GM12878 (cell line): ENCODE measurements at regions of chr2 and their contacts with region 1.

Region 1: GRCh38 chr2:177148477-177149154 is 64.0 kb upstream of the HNRNPA3 start:
- DNase-seq: peak; percentile 45
- ATAC-seq: peak; percentile 95
- H3K4me3 ChIP-seq: peak overlapping the region; percentile 69
- H3K27ac ChIP-seq: no peak overlapping the region
- H3K4me1 ChIP-seq: no peaks in the 10 kb centered on the region
- H3K27me3 ChIP-seq: peaks cover 0 to 2% of the 10 kb centered on the region in 2 experiments; a peak in 1 of 4 replicates
- CTCF ChIP-seq: peak; percentile 87 to 93 (median 92)
- EP300 ChIP-seq: 0 out of 4 replicates have a peak, but pooled peaks of 1 of the 2 experiments have one; percentile 13
- POLR2A ChIP-seq: no peak
- RAD21 ChIP-seq: peak; percentile 67

Region 2: GRCh38 chr2:176126929-176127773 is 1021.5 kb before region 1 on chr2:
- CTCF ChIA-PET with region 1: interaction called, 40 read pairs
- POLR2A ChIA-PET with region 1: no interaction called
- RAD21 ChIA-PET with region 1: interaction called, 17 read pairs
- SMC1A ChIA-PET with region 1: interaction called, 13 read pairs
- in situ Hi-C with region 1: loop called (anchors 5 kb)
- intact Hi-C with region 1: loop called (anchors 2 kb)
- DNase-seq: no peak
- ATAC-seq: peak; percentile 49; the same call in 2 of the 3 replicates
- H3K4me3 ChIP-seq: no peak overlapping the region
- H3K27ac ChIP-seq: no peak overlapping the region
- H3K4me1 ChIP-seq: no peaks in the 10 kb centered on the region
- H3K27me3 ChIP-seq: peaks cover 7 to 29% of the 10 kb centered on the region in 2 experiments
- CTCF ChIP-seq: peak; percentile 61 to 77 (median 66)
- EP300 ChIP-seq: no peak
- POLR2A ChIP-seq: no peak
- RAD21 ChIP-seq: peak; percentile 81

Region 3: DNA sequence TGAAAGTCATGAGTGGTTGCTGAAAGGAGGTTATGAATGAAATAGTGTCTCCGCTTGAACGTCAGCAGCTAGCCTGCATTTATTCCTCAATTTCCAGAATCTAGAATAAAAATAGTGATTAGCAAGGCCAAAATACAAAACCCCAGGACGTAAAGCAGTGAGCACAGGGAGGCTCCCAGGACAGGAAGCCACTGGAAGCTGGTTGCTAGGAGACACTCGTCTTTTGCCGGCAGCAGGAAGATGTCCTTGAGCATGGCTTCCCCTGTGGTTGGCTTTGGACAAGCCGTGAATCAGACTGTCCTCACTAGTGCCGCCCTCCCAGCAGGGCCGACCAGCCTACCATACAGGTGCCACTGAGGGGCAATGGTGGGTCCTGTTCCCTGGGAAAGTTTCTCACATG is 505.0 kb before region 1 on chr2:
- CTCF ChIA-PET with region 1: interaction called, 15 read pairs
- POLR2A ChIA-PET with region 1: no interaction called
- RAD21 ChIA-PET with region 1: no interaction called
- SMC1A ChIA-PET with region 1: interaction called, 5 read pairs
- in situ Hi-C with region 1: no loop called
- intact Hi-C with region 1: no loop called
- DNase-seq: no peak
- ATAC-seq: no peak
- H3K4me3 ChIP-seq: no peak overlapping the region
- H3K27ac ChIP-seq: no peak overlapping the region
- H3K4me1 ChIP-seq: no peaks in the 10 kb centered on the region
- H3K27me3 ChIP-seq: peaks cover 3 to 4% of the 10 kb centered on the region in 2 experiments; a peak in 3 of 4 replicates
- CTCF ChIP-seq: no peak
- EP300 ChIP-seq: no peak
- POLR2A ChIP-seq: no peak
- RAD21 ChIP-seq: no peak

Region 4: DNA sequence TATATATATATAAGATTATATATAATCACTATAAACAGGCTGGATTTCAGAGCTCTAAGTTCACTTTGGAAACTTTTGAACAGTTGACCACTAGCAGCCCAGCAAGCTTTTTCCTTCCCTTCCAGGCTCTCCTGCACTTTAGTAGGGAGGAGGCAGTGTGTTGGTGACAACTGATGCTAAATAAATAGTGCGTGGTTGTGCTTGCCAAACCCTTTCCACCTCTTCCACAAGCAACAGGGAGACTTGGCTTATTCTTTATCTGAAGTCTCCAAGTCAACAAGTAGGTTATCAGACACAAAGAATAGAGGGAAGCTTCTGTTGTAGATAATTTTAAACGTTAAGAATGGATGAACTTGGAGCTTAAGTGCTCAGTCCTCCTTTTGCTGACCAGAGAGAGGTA is 344.2 kb before region 1 on chr2:
- CTCF ChIA-PET with region 1: interaction called, 5 read pairs
- POLR2A ChIA-PET with region 1: no interaction called
- RAD21 ChIA-PET with region 1: interaction called, 10 read pairs
- SMC1A ChIA-PET with region 1: interaction called, 3 read pairs
- in situ Hi-C with region 1: no loop called
- intact Hi-C with region 1: no loop called
- DNase-seq: no peak
- ATAC-seq: no peak
- H3K4me3 ChIP-seq: no peak overlapping the region
- H3K27ac ChIP-seq: no peak overlapping the region
- H3K4me1 ChIP-seq: no peaks in the 10 kb centered on the region
- H3K27me3 ChIP-seq: no peaks in the 10 kb centered on the region
- CTCF ChIP-seq: no peak
- EP300 ChIP-seq: no peak
- POLR2A ChIP-seq: no peak
- RAD21 ChIP-seq: no peak

Region 5: GRCh38 chr2:176931588-176932563 is 216.7 kb before region 1 on chr2:
- CTCF ChIA-PET with region 1: interaction called, 5 read pairs
- POLR2A ChIA-PET with region 1: no interaction called
- RAD21 ChIA-PET with region 1: interaction called, 6 read pairs
- SMC1A ChIA-PET with region 1: interaction called, 11 read pairs
- in situ Hi-C with region 1: no loop called
- intact Hi-C with region 1: loop called (anchors 5 kb)
- DNase-seq: peak; percentile 97
- ATAC-seq: peak; percentile 92
- H3K4me3 ChIP-seq: no peak overlapping the region
- H3K27ac ChIP-seq: peak overlapping the region; percentile 72
- H3K4me1 ChIP-seq: peaks cover 38% of the 10 kb centered on the region
- H3K27me3 ChIP-seq: no peaks in the 10 kb centered on the region
- CTCF ChIP-seq: no peak
- EP300 ChIP-seq: peak; percentile 90 to 95
- POLR2A ChIP-seq: no peak
- RAD21 ChIP-seq: peak; percentile 21; the same call in 1 of the 2 replicates

Region 6: DNA sequence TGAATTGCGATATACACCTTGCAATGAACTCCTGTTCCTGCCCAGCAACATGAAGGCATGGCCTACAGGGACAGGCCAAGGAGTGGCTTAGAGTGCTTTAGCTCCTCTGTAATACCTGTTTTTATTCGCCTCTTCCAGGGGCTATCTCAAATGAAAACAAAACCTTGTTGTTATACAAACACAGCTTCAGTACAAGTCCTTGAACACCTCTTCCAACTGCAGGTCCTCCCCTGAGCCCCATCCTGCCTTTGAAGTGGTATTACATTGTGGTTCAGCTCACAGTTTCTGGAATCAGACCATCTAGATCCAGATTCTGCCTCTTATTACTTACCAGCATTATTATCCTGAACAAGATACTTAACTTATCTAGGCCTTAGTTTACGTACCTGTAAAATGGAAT is 19.0 kb before region 1 on chr2:
- CTCF ChIA-PET with region 1: interaction called, 22 read pairs
- POLR2A ChIA-PET with region 1: no interaction called
- RAD21 ChIA-PET with region 1: interaction called, 4 read pairs
- SMC1A ChIA-PET with region 1: interaction called, 4 read pairs
- in situ Hi-C with region 1: no loop called
- intact Hi-C with region 1: no loop called
- DNase-seq: no peak
- ATAC-seq: no peak
- H3K4me3 ChIP-seq: no peak overlapping the region
- H3K27ac ChIP-seq: no peak overlapping the region
- H3K4me1 ChIP-seq: no peaks in the 10 kb centered on the region
- H3K27me3 ChIP-seq: no peaks in the 10 kb centered on the region
- CTCF ChIP-seq: no peak
- EP300 ChIP-seq: no peak
- POLR2A ChIP-seq: no peak
- RAD21 ChIP-seq: no peak

Region 7: DNA sequence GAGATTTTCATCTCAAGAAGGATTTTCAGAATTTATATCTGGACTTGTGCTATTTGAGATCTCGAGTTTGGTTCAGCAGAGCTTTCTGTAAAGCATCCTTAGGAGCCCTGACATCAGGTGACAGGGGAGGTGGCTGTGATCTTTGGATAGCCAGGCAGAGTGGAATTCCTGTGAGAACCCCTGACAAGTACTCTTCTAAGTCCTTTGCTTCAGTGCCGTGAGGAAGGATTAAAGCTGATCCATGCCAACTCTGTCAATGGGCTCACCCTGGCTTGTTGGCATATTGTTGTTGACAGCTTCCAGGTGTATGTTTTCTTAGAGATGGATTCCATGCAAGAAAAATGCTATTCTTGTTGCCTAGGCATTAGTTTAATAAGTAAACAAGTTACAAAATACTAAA is 153.9 kb after region 1 on chr2:
- CTCF ChIA-PET with region 1: no interaction called
- POLR2A ChIA-PET with region 1: no interaction called
- RAD21 ChIA-PET with region 1: no interaction called
- SMC1A ChIA-PET with region 1: no interaction called
- in situ Hi-C with region 1: no loop called
- intact Hi-C with region 1: no loop called
- DNase-seq: no peak
- ATAC-seq: no peak
- H3K4me3 ChIP-seq: no peak overlapping the region
- H3K27ac ChIP-seq: no peak overlapping the region
- H3K4me1 ChIP-seq: no peaks in the 10 kb centered on the region
- H3K27me3 ChIP-seq: no peaks in the 10 kb centered on the region
- CTCF ChIP-seq: no peak
- EP300 ChIP-seq: no peak
- POLR2A ChIP-seq: no peak
- RAD21 ChIP-seq: no peak

Region 8: DNA sequence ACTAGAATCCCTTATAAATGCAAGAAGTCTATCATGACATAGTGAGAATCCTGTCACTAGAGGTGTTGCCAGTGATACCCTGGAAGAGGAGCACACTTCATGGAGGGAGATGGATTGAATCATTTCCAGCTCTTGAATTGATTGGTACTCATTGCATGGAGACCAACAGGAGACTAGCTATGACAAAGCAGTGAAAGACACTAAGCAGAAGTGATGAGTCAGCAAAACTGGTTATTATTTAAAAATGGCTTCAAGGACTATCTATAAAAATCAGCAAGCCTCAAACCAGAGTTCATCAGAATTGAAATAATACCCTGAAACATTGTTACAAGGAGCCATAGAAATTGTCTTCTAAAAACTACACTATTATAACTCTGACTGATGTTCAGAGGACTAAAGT is 723.7 kb after region 1 on chr2:
- CTCF ChIA-PET with region 1: no interaction called
- POLR2A ChIA-PET with region 1: no interaction called
- RAD21 ChIA-PET with region 1: no interaction called
- SMC1A ChIA-PET with region 1: no interaction called
- in situ Hi-C with region 1: no loop called
- intact Hi-C with region 1: no loop called
- DNase-seq: no peak
- ATAC-seq: no peak
- H3K4me3 ChIP-seq: no peak overlapping the region
- H3K27ac ChIP-seq: no peak overlapping the region
- H3K4me1 ChIP-seq: no peaks in the 10 kb centered on the region
- H3K27me3 ChIP-seq: no peaks in the 10 kb centered on the region
- CTCF ChIP-seq: no peak
- EP300 ChIP-seq: no peak
- POLR2A ChIP-seq: no peak
- RAD21 ChIP-seq: no peak